ENCODE measurements at regions of chr1 and their contacts with region 1.

Region 1: DNA sequence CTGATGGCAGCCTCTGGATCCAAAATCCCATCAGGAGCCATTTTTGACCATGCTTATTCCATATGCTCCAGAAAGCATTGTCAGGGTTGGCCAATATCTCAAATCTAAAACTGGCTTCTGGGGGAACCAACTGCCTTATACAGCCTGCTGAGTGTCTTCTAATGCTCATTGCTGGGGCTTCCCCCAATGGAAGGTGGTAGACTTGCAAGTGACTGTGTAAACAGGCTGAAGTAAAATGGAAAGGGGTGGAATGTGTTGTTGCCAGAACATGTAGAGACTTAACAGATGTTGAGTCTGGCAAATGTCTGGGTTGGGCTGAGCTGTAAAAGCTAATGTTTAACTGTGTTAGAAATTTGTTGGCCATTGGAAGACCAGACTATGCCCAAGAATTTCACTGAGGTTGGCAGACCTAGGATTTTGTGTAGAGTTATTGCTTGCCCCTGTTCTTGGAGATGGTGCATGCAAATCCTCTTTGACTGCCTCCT is 22.7 kb upstream of the LRIF1 start:
- DNase-seq: no peak
- ATAC-seq: peak; percentile 61
- H3K4me3 Mint-ChIP-seq: no peak overlapping the region
- H3K27ac Mint-ChIP-seq: no peak overlapping the region
- H3K4me1 Mint-ChIP-seq: peaks cover 9% of the 10 kb centered on the region
- H3K27me3 Mint-ChIP-seq: peaks cover 2% of the 10 kb centered on the region

Region 2: GRCh38 chr1:110524311-110525251 is 461.9 kb before region 1 on chr1:
- CTCF ChIA-PET with region 1: no interaction called
- POLR2A ChIA-PET with region 1: no interaction called
- intact Hi-C with region 1: loop called in 1 of 2 experiments (anchors 10 kb)
- DNase-seq: peak; percentile 75
- ATAC-seq: peak; percentile 88
- H3K4me3 Mint-ChIP-seq: no peak overlapping the region
- H3K27ac Mint-ChIP-seq: no peak overlapping the region
- H3K4me1 Mint-ChIP-seq: peaks cover 2% of the 10 kb centered on the region
- H3K27me3 Mint-ChIP-seq: peaks cover 25% of the 10 kb centered on the region

Region 3: DNA sequence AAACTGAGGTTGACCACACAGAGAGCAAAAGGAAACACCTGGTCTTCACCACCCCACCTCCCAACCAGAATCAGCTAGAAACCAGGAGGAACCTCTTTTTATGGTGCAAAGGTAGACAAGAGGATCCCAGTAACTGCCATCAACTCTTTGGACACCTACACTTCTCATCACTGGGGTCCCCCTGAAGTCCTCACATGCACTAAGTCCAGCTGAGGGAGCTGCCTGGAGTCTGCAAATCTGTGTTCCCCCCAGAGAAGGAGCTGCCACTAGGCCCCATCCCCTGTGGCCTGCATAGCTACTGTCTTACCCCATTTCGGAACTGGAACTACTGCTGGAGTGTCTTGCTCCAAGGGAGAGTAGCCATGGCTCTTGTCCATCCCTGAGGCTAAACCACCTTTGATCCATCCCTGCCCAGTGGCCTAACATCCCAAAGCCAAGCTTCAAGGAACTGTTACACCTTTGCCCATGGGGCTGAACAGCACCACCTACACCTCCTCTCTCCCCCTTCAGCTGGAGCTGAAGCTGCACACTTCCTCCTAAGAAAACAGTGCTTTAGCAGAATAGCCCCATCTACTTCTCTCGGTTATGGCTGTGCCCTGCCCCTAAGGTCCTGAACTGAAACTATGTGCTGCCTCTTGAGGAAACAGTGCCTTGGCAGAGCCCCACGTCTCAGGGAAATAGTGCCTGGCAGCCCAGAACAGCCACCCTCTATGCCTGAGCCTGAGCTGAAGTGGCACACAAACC is 198.9 kb before region 1 on chr1:
- CTCF ChIA-PET with region 1: interaction called, 38 read pairs
- POLR2A ChIA-PET with region 1: no interaction called
- intact Hi-C with region 1: no loop called
- DNase-seq: peak; percentile 33
- ATAC-seq: peak; percentile 35
- H3K4me3 Mint-ChIP-seq: peak overlapping the region; percentile 9
- H3K27ac Mint-ChIP-seq: peak overlapping the region; percentile 87
- H3K4me1 Mint-ChIP-seq: peaks cover 60% of the 10 kb centered on the region
- H3K27me3 Mint-ChIP-seq: no peaks in the 10 kb centered on the region

Region 4: GRCh38 chr1:110928904-110929303 is 57.5 kb before region 1 on chr1:
- CTCF ChIA-PET with region 1: no interaction called
- POLR2A ChIA-PET with region 1: no interaction called
- intact Hi-C with region 1: no loop called
- DNase-seq: no peak
- ATAC-seq: no peak
- H3K4me3 Mint-ChIP-seq: no peak overlapping the region
- H3K27ac Mint-ChIP-seq: no peak overlapping the region
- H3K4me1 Mint-ChIP-seq: no peaks in the 10 kb centered on the region
- H3K27me3 Mint-ChIP-seq: no peaks in the 10 kb centered on the region